Transverse colon (tissue), 4 donors: ENCODE measurements at regions of chr9 and their contacts with region 1.

Region 1: DNA sequence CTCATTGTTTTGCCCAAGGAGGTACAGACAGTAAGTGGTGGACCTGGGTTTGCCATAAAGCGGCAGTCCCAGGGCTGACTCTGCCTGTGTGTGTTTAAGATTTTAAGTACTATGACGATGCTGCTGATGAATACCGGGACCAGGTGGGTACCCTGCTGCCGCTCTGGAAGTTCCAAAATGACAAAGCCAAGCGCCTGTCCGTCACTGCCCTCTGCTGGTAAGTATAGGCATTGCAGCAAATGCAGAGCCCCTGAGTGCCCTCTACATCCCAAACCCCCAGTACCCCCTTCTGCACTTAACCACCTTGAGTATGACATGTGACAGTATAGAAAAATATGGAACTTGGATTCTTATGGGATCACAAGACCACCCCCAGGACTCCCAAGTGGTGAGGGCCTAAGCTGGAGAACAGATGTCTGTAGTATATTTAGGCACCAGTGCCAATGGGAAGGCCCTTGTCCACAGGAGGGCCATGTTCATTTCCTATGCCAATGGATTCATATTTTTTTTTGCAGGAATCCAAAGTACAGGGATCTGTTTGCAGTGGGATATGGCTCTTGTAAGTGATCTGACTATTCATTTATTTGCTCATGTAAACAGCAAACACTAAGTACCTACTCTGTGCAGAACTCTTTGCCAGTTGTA is 22.0 kb downstream of the ENHO start:
- DNase-seq: peak; percentile 58
- H3K4me3 ChIP-seq: no peak overlapping the region
- H3K27ac ChIP-seq: no peak overlapping the region
- H3K4me1 ChIP-seq: peaks cover 0 to 11% (median 4%) of the 10 kb centered on the region in 4 donors
- H3K27me3 ChIP-seq: no peaks in the 10 kb centered on the region
- CTCF ChIP-seq: peak; percentile 90 to 99 (median 98)
- EP300 ChIP-seq: no peak
- POLR2A ChIP-seq: no peak

Region 2: DNA sequence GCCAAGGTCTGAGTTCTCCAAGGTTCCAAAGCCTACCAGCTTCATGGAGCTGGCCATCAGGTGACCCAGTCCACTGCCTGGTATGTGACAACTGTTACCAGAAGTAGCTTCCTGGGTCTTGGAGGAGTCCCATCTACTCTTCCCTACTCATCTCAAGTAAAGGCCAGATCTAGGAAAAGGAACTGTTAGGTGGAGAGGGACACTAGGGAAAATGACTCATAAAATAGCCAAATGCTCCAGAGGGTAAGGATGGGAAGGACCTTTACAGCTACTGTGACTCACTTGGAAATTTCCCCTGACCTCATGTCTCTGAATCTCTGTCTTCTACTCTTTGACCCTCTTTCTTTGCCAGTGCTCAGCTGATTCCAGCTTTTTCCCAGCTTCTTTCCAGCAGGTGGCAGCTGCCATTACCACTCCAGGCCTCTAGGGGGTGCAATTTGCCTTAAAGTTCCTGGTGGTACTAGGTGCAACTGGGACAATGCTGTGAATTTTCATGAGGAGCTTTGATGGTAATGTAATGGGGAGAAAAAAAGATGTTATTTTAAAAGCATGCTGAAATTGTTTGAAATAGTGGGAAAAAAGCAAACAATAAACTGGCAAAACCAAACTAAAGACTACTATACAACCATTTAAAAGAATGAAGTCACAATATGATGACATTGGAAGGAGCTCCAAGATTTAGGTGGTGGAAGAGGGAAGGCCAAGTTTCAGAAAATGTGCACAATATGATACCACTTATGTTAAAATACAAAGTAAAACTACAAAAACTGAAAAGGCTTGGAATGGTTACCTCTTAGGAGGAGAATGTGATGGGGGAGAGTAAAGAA is 97.0 kb before region 1 on chr9:
- in situ Hi-C with region 1: no loop called
- intact Hi-C with region 1: loop called (anchors 5 kb)
- DNase-seq: peak; percentile 71
- H3K4me3 ChIP-seq: no peak overlapping the region
- H3K27ac ChIP-seq: no peak overlapping the region
- H3K4me1 ChIP-seq: no peaks in the 10 kb centered on the region
- H3K27me3 ChIP-seq: no peaks in the 10 kb centered on the region
- CTCF ChIP-seq: peak; percentile 93 to 99 (median 97)
- EP300 ChIP-seq: no peak
- POLR2A ChIP-seq: no peak

Region 3: DNA sequence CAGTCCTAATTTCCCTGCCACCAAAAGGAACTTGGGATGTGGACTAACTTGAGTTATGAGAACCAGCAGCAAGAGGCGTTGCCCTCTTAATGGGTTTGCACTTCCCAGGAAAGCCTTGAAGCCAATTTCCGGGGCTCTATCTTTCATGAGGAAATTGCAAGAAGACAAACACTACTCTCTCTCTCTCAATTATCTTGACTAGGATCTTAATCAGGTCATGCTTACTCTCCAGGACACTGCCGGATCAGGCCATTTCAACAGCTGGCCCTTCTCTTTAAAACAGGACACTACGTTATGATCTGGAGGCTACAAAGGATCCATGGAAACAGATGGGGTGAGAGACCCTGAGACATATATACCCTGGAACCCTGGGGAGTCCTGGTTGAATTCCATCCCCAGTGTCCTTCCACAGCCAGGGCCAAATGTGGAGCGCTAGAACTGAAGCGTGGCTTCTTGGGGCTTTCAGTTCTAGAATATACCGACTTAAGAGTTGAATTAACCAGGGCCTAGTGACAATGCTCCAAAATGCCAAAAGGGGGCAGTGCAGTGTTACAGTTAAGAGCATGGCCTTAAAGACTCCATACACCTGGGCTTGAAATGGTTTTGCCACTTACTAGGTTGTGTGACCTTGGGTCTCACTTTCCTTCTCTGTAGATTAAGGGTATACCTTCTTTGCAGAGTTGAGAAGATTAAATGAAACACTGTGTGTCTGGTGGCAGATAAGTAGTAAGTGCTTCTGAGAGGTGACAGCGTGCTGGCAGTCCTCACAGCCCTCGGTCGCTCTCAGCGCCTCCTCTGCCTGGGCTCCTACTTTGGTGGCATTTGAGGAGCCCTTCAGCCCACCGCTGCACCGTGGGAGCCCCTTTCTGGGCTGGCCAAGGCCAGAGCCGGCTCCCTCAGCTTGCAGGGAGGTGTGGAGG is 63.5 kb before region 1 on chr9:
- in situ Hi-C with region 1: loop called in 1 of 4 experiments (anchors 5 kb)
- intact Hi-C with region 1: no loop called
- DNase-seq: peak; percentile 62
- H3K4me3 ChIP-seq: no peak overlapping the region
- H3K27ac ChIP-seq: no peak overlapping the region
- H3K4me1 ChIP-seq: peaks cover 0 to 7% (median 2%) of the 10 kb centered on the region in 4 donors
- H3K27me3 ChIP-seq: no peaks in the 10 kb centered on the region
- CTCF ChIP-seq: peak; percentile 68 to 78 (median 77)
- EP300 ChIP-seq: no peak
- POLR2A ChIP-seq: no peak

Region 4: GRCh38 chr9:36036780-36037548 is 1536.2 kb after region 1 on chr9 and contains the start of gene RECK:
- in situ Hi-C with region 1: no loop called
- intact Hi-C with region 1: no loop called
- DNase-seq: peak; percentile 88
- H3K4me3 ChIP-seq: peak within 1 kb of the TSS; percentile 55 to 91 (median 86)
- H3K27ac ChIP-seq: peak within 1 kb of the TSS; percentile 80 to 86 (median 82)
- H3K4me1 ChIP-seq: peaks cover 4 to 29% (median 8%) of the 10 kb centered on the region in 4 donors
- H3K27me3 ChIP-seq: no peaks in the 10 kb centered on the region
- CTCF ChIP-seq: no peak
- EP300 ChIP-seq: no peak
- POLR2A ChIP-seq: peak; percentile 31
- total RNA-seq, gene RECK: 1.5 to 30.3 (median 6.0) TPM